AG04449 (cell line): ENCODE measurements at regions of chr15 and their contacts with region 1.

Region 1: DNA sequence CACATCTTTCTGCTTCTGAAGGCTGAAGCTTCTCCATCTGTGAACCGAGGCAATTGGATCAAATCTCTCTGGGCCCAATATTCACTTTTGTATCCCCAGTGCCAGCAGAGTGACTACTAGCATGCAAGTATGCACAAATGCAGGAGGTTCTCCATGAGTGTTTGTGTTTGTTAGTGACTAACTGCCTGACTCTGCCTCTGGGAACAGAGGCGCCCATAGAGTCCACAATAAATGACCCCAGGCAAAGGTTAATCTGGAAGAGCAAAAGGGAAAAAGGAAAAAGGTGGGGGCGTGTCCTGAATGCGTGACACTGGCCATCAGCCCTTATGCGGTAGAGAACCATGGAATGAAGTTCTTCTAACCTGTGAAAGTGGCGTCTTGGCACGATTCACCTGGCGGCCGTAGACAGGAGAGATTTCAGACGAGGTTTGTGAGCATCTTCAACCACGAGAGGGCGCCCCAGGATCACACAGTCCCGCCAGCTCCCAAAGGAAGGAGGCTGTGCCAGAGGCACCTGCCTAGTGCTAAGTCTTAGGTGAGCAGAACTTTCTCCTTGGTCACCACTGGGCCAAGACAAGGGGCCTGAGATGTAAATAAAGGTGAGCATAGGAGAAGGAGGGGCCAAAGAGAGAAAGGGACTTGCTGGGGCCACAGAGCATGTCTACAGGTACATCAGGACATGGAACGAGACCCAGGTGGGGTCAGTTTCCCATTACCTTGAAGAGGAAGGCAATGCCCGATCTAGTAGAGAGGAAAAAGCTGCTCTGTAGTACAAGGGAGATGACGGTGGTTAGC is 44.2 kb downstream of the RBPMS2 start:
- DNase-seq: no peak
- H3K4me3 ChIP-seq: no peak overlapping the region
- CTCF ChIP-seq: peak; percentile 82

Region 2: DNA sequence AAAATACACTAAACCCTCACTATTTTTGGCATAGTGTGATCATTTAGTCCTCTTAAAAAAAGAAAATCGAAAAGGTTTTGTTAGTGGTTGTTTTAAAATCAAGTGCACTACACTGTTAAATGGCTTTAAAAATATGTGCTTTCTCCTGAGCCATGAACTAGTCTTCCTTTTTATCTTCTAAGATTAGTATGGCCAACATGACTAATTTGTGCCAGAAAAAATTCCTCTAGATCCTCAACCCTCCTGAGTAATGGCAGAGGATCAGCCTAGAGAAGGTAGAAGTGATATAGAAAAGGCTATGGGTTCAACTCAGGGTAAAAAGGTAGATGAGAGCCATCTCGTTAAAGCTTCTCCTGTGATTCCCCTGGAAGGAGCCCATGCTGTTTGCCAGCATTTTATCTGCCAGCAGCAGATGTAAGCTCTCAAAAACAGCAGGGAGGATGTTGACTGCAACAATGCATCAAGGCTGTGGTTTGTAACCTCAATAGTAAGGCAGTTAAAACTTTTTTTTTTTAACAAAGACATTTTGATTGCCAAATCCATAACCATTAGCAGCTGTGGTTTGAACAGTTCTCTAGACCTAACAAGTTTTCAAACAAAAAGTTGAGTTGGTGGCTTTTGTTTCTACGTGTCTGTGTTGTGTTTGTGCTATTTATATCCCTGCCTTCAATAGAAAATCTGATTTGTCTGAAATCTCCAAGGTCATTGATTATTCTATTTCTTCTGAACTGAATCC is 301.0 kb before region 1 on chr15:
- CTCF ChIA-PET with region 1: interaction called, 45 read pairs
- POLR2A ChIA-PET with region 1: no interaction called
- DNase-seq: peak; percentile 60
- H3K4me3 ChIP-seq: no peak overlapping the region
- CTCF ChIP-seq: no peak

Region 3: DNA sequence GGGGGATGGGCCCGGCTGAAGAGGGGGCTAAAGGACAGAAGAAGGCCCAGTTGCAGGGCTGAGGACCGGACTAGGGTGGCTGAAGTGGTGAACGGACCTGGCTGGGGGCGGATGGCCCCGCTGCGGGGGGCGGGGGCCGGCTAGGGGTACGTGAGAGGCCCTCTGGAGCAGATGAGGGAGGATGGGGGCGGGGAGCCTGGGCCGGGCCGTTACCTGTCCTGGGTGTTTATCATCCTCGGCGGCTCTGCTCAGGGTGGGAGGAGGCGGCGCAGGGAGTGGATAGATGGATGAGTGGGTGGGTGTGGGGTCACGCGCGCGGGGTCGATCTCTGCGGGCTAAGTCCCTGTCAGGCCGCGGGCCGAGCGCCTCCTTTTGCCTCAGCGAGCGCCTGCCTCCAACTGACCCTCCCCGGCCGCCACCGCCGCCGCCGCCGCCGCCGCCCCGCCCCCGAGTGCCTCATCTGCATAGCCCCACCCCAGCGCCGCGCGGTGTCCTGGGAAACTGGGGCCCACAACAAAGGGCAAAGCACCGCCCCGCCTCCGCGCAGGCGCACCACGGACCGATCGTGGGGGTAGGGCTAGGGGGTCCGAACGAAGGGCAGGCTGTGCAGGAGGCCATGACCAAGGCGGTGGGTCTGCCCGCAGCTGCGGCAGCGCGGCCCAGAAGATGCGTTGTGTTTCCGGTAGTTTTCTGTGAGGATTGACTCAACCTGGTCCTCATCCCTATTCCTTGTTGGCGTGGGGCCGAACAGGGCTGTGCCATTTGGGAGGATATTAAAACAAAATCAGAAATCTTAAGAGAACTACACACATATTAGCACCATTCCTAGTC is 28.2 kb before region 1 on chr15:
- CTCF ChIA-PET with region 1: interaction called, 690 read pairs
- POLR2A ChIA-PET with region 1: no interaction called
- DNase-seq: peak; percentile 26
- H3K4me3 ChIP-seq: peak overlapping the region; percentile 91
- CTCF ChIP-seq: no peak

Region 4: GRCh38 chr15:64749999-64750657 is 18.9 kb after region 1 on chr15:
- CTCF ChIA-PET with region 1: interaction called, 20 read pairs
- POLR2A ChIA-PET with region 1: no interaction called
- DNase-seq: no peak
- H3K4me3 ChIP-seq: no peak overlapping the region
- CTCF ChIP-seq: no peak

Region 5: DNA sequence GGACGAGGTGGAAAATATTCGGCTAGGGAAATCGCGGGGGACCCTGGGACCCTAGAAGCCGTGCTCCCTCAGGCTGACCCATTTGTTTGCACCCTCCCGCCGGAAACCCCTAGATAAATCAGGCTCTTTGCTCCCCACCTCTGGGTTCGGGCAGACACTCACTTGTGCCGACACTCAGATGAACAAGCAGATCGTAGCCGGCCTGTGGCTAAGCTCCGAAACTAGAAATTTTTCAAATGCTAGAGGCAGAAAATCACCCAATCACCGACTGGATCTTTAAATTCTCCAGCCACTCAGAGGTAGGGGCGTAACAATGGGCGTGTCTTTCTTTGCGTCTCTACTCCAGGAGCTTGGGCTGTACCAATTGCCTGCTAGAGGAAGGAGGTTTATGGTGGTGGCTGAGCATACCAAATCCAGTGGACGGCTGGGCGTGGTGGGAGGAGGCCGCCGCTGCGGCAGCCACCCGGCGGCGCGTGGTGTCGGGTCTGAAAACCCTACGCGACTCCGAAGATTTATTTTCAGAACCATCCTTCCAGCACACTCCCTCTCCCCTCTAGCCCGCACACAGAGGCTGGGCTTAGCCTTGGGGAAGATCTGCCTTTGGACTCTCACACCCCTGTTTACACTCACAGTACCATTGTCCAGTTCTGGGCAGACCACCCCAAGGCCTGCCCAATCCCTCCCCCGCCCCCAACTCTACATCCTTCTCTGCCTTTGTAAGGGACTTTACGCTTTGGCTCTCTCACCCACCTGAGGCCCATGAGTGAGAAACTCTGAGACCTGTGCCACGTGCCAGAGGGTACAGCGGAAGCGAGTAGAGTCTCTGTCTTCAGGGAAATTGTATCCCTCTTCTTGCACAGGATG is 94.5 kb after region 1 on chr15 and contains the start of gene PIF1:
- CTCF ChIA-PET with region 1: interaction called, 13 read pairs
- POLR2A ChIA-PET with region 1: no interaction called
- DNase-seq: peak; percentile 93
- H3K4me3 ChIP-seq: peak within 1 kb of the TSS; percentile 68
- CTCF ChIP-seq: no peak

Region 6: DNA sequence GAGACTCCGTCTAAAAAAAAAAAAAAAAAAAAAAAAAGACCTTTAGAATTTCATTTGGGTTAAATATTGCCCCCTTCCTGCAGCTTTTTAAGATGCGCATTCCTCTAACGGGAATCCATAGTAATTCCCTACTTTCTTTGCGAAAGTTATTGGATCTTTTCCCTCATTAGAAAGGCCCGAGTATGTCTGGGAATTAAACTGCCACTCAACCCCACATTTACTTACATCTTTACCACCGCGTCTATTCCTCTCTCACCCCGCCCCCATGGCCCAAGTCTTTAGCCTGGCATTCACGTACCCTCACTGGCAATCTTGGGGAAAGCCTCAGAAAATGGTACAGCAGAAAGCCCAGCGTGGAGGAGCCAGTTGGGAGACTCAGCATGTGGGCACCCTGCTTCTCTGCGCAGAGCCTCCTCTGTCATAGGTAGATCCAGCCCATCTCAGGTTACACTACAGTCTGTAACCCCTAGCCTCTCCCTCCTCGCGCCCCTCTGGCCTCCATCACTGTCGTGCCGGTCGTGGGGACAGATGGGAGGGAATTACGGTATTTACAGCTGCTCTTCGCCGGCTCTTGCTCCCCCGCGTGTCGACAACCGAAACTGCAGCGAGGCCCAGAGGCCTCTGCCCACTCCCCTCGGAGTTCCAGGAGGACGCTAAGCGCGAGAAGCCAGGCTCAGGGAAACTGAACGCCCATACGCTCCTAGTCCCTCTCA is 174.1 kb after region 1 on chr15:
- CTCF ChIA-PET with region 1: interaction called, 58 read pairs
- POLR2A ChIA-PET with region 1: no interaction called
- DNase-seq: no peak
- H3K4me3 ChIP-seq: peak overlapping the region; percentile 43
- CTCF ChIP-seq: peak; percentile 90

Region 7: DNA sequence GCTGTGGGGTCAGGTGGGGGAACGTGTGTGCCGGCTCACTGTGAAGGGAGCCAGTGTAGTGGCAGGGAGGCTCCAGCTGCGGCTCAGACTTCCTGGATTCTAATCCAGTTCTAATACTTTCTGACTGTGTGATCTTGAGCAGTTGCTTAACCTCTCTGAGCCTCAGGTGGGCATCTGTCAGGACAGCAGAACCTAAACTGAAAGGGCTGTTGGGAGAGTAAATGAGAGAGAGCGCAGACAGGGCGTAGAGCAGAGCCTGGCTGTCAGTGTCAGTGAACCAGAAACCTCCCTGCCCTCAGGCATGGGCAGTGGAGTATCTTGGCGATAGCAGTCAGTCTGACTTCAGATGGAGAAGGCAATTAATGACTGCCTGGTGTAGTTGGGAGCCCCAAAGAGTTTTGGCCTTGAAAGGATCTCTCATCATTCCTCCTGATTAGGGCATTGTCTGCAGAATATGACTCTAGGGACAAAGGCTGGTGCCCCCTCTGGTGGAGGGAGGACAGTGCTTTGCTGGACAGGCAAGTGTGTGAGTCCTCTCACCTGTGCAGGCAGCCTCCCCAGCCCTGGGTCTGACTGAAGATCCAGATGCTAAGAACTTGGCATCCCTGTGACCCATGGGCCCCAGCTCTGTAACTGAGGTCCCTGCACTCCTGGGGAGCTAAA is 354.9 kb after region 1 on chr15:
- CTCF ChIA-PET with region 1: interaction called, 11 read pairs
- POLR2A ChIA-PET with region 1: no interaction called
- DNase-seq: no peak
- H3K4me3 ChIP-seq: no peak overlapping the region
- CTCF ChIP-seq: peak; percentile 55